HCT116 (cell line): ENCODE measurements at regions of chr11 and their contacts with region 1.

Region 1: DNA sequence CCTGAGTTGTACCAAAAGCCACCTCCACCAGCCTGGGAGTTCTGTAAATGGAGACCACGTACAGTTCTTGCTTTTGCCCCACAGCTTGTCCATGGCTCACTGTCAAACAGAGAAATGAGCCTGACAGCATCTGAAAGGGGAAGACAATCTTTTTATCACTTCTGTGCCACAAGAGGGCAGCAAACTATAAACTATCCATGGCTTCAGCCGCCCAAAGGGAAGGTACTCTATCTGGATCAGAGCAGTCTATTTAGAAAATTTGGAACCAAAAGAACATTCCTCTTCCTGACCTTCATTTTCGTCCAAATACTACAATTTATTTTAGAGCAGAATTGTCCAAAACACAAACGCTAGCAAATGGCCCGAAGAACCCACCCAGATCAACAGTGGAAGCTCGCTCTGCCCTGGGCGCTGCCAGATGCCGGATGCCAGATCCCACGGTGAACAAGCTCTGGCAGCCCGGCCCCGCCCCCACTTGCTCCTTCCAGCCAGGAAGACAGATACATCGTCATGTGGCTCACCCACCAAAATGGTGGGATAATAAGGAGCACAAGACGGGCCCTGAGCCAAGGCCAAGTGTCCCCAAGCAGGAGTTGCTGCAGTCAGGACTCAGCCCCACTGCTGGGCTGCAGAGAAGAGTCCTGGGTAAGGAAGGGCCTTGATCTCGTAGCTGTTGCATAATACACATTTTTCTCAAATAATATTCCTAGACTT is 23.9 kb upstream of the SCGB1A1 start:
- DNase-seq: peak; percentile 61
- ATAC-seq: peak; percentile 82
- H3K4me3 ChIP-seq: no peak overlapping the region; a peak in 1 of 4 replicates
- H3K27ac ChIP-seq: no peak overlapping the region
- H3K4me1 ChIP-seq: peaks cover 9 to 21% of the 10 kb centered on the region in 2 experiments; a peak in 3 of 4 replicates
- H3K27me3 ChIP-seq: no peaks in the 10 kb centered on the region
- CTCF ChIP-seq: peak; percentile 58 to 85 (median 81)
- POLR2A ChIP-seq: no peak
- RAD21 ChIP-seq: peak; percentile 95

Region 2: GRCh38 chr11:62406034-62406433 is 11.1 kb after region 1 on chr11:
- CTCF ChIA-PET with region 1: interaction called, 10 read pairs
- POLR2A ChIA-PET with region 1: no interaction called
- RAD21 ChIA-PET with region 1: no interaction called
- intact Hi-C with region 1: no loop called
- DNase-seq: no peak
- ATAC-seq: no peak
- H3K4me3 ChIP-seq: no peak overlapping the region
- H3K27ac ChIP-seq: no peak overlapping the region
- H3K4me1 ChIP-seq: peaks cover 0 to 2% of the 10 kb centered on the region in 2 experiments; a peak in 1 of 4 replicates
- H3K27me3 ChIP-seq: no peaks in the 10 kb centered on the region
- CTCF ChIP-seq: no peak
- POLR2A ChIP-seq: no peak
- RAD21 ChIP-seq: no peak

Region 3: GRCh38 chr11:62694455-62695167 is 299.6 kb after region 1 on chr11:
- CTCF ChIA-PET with region 1: interaction called, 15 read pairs
- POLR2A ChIA-PET with region 1: no interaction called
- RAD21 ChIA-PET with region 1: no interaction called
- intact Hi-C with region 1: loop called (anchors 5 kb)
- DNase-seq: peak; percentile 72
- ATAC-seq: peak; percentile 90
- H3K4me3 ChIP-seq: no peak overlapping the region
- H3K27ac ChIP-seq: peak overlapping the region; percentile 56
- H3K4me1 ChIP-seq: no peaks in the 10 kb centered on the region
- H3K27me3 ChIP-seq: no peaks in the 10 kb centered on the region
- CTCF ChIP-seq: peak; percentile 86 to 88 (median 87); a peak in 5 of 6 replicates
- POLR2A ChIP-seq: no peak
- RAD21 ChIP-seq: peak; percentile 80